Spleen (tissue), 13 donors: ENCODE measurements at regions of chr10 and their contacts with region 1.

Region 1: DNA sequence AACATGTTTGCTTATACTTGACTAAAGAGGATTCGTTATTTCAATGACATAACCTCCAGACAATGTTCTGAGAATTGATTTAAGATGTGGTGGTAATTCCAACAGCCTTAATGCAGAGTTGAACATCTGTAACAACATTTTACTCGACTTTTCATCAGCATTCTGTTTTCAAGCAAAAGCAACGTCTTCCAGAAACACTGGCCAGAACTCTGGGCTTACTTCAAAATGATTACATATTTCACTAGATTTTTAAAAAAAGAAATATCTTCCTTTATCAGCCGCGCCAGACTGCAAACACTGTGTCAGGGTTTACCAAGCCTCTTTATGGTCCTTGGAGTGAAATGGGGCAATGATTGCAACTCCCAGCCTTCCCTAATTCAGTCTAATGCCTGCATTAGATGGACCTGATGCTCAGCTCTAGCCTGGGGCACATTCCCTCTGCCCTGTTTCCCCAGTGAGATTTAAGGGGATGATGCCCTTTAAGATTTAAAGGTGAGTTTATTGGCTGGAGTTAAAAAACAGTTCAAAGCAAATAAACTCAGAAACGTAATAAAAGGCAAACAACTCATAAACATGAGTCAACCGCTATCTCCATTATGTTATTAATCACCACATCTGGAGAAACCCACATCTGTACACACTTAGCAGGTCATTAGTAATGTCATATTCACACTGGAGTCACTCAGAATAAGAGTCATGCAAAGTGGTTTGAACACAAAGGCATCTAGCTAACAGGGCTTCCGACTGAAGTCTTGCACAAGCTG is 663.9 kb downstream of the KCNMA1 start:
- DNase-seq: no peak
- H3K4me3 ChIP-seq: no peak overlapping the region
- H3K27ac ChIP-seq: no peak overlapping the region
- H3K4me1 ChIP-seq: no peaks in the 10 kb centered on the region
- H3K27me3 ChIP-seq: no peaks in the 10 kb centered on the region
- CTCF ChIP-seq: no peak
- POLR2A ChIP-seq: no peak

Region 2: DNA sequence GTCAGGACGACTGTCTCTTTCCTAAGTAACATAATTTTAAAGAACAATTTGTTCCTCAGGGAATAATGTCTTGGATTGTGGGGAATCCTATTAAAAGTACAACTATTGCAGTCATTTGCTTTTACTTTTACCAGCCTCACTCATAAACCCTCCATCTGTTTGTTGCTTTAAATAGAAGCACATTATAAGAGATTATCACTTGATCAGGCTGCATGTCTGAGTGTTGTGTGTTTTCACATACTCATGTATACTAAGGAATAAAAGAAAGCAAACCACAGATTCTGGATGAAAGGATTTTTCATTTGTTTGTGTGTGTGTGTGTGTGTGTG is 413.8 kb before region 1 on chr10:
- intact Hi-C with region 1: loop called (anchors 10 kb)
- DNase-seq: no peak
- H3K4me3 ChIP-seq: no peak overlapping the region
- H3K27ac ChIP-seq: peak overlapping the region in 1 of 8 donors; percentile 37
- H3K4me1 ChIP-seq: no peaks in the 10 kb centered on the region
- H3K27me3 ChIP-seq: no peaks in the 10 kb centered on the region
- CTCF ChIP-seq: no peak
- POLR2A ChIP-seq: no peak